ENCODE measurements at regions of chr5 and their contacts with region 1.

Region 1: DNA sequence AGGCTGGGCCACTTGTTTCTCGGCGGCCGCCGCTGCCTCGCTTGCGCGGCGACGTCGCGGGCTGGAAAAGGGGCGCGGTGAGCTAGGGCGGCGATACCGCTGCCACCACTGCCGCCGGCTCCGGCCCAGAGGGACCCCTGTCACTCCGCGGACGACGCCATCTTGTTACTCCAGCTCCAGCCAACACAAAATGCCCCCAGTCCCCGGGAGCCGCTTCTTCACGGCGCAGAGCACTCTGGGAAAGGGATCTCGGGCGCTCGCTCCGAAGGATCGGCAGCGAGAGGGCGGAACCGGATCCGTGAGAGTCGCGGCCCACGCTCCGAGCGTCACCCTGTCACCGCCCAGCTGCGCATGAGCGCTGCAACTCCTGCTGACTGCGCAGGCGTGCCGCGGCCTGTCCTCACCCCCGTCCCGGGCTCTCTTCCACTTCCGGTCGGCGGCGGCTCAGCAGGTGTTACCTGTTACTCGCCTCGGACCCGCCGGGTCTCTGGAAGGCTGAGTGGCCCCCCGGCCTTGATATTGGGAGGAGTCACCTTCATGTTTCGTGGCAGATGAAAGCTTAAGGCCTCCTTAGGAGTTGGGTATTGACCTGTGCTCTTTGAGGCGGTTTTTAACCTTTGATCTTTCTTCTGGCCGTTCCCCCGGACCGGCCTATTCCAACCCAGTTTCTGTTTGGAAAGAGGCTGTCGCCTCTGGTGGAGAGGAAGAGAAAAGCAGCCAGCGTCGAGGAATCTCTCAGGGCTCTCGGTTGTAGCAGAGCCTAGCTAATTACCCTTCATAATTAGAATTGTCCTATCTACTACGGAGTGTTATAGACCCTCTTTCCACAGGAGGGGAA is at the start of gene CSNK1A1:
- DNase-seq: peak; percentile 97 to 99 (median 99)
- ATAC-seq: peak; percentile 86 to 88
- H3K4me3 Mint-ChIP-seq: peak within 1 kb of the TSS; percentile 95 to 99 (median 98)
- H3K27ac Mint-ChIP-seq: peak within 1 kb of the TSS; percentile 95 to 100 (median 99)
- H3K4me1 Mint-ChIP-seq: peaks cover 19 to 46% (median 33%) of the 10 kb centered on the region in 4 donors
- H3K27me3 Mint-ChIP-seq: no peaks in the 10 kb centered on the region
- polyA plus RNA-seq, gene CSNK1A1: 133 to 143 (median 137) TPM

Region 2: DNA sequence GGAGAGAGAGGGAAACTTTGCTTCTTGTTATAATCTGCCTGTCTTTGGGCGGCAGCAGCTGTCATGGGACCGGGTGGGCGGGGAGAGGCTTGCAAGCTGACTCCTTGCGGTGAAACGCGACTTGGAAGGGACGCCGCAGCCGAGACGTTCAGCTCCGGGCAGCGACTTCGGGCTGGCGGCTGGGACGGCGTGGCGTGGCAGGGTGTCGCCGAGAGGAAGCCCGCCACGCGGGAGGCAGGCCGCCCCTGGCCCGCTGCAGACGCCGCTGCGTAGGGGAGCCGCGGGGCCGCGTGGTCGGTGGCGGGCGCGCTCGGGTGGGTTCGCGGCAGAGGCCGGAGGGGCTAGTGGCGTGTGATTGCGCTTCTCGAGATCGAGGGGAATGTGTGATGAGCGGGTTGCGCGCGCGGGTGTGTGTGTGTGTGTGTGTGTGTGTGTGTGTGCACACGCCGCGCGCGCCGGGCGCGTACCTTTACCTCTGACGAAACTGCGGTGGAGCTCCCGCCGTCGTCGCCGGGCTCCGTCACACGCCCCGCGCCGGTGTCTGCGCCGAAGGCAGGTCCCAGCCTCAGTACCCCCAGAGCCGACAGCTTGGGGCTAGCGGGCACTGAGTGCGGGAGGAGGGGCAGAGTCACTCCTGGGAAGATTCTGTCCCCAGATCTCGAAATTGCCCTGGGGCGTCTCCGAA is 180.4 kb after region 1 on chr5:
- POLR2A ChIA-PET with region 1: interaction called, 20 read pairs
- DNase-seq: peak; percentile 54 to 88 (median 69)
- ATAC-seq: peak; percentile 47 to 51
- H3K4me3 Mint-ChIP-seq: peak overlapping the region; percentile 83 to 95 (median 90)
- H3K27ac Mint-ChIP-seq: peak overlapping the region in 8 of 10 donors; percentile 64 to 94 (median 88)
- H3K4me1 Mint-ChIP-seq: peaks cover 12 to 20% (median 19%) of the 10 kb centered on the region in 4 donors
- H3K27me3 Mint-ChIP-seq: no peaks in the 10 kb centered on the region

Measured in naive thymus-derived CD8-positive, alpha-beta T cell (primary cell).